ENCODE measurements at regions of chr2 and their contacts with region 1.

Region 1: GRCh38 chr2:109545828-109546713 is 67.7 kb downstream of the SEPTIN10 start:
- DNase-seq: peak in 2 of 3 donors; percentile 76 to 83
- ATAC-seq: peak; percentile 90
- H3K4me3 ChIP-seq: no peak overlapping the region
- H3K4me1 ChIP-seq: no peaks in the 10 kb centered on the region
- CTCF ChIP-seq: peak; percentile 68

Region 2: DNA sequence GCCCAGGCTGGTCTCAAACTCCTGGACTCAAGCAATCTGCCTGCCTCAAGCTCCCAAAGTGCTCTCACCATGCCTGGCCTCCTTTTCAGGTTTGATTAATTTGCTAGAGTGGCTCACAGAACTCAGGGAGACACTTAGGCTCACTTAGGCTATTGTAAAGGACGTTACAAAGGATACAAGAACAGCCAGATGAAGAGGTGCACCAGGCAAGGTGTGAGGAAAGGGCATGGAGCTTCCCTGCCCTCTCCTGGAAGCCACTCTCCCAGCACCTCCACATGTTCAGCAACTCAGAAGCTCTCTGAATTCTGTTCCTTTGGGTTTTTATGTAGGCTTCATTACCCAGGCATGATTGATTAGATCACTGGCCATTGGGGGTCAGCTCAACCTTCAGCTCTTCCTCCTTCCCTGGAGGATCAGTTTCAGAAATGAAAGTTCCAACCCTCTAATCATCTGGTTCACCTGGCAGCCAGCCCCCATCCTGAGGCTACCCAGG is 169.3 kb after region 1 on chr2:
- intact Hi-C with region 1: loop called (anchors 5 to 10 kb)
- DNase-seq: peak in 2 of 3 donors; percentile 64 to 69
- ATAC-seq: peak; percentile 94
- H3K4me3 ChIP-seq: no peak overlapping the region
- H3K4me1 ChIP-seq: peaks cover under 1% of the 10 kb centered on the region
- CTCF ChIP-seq: peak; percentile 67